Left cardiac atrium (tissue), 4 donors: ENCODE measurements at regions of chr3 and their contacts with region 1.

Region 1: GRCh38 chr3:59150039-59150438 is 100.2 kb upstream of the CFAP20DC start:
- DNase-seq: no peak
- ATAC-seq: no peak

Region 2: DNA sequence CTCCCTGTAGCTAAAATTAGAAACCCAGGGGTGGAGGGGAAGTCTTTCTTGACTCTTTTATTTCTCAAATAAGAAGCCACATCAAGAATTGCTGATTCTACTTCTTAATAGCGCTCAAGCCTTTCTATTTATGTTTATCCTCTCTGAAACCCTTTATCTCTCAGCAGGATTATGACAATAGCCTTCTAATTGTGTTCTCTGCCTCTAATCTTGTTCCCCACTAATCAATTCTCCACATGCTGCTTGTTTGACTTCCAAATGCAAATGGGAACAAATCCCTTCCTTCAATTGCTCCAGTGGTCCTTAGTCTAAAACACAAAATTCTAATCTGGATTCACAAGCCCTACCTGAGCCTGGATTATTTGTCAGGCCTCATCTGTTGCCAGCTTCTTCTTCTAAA is 56.5 kb before region 1 on chr3:
- intact Hi-C with region 1: loop called in 1 of 2 experiments (anchors 5 kb)
- DNase-seq: no peak
- ATAC-seq: no peak